Panc1 (cell line): ENCODE measurements at regions of chr2 and their contacts with region 1.

Region 1: DNA sequence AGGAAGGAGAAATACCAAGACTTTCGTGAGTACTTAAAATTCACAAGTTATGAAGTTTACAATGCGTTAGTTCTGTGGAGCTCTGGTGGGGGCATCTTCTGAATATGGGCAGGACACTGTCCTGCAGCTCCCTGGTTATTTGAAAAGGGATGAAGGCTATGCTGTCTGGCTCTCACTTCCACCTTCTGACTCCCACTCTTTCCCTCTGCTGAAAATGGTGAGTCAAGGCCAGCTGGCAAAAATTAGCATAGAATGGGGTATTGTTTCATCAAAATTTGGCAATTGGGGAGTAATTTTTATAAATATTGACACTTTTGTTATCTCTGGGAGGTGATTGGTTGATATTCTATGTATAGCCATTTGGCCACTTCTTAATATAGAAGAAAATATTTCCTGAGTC is 177.4 kb downstream of the PARD3B start:
- DNase-seq: no peak
- ATAC-seq: no peak
- H3K4me3 ChIP-seq: no peak overlapping the region
- H3K27ac ChIP-seq: no peak overlapping the region
- H3K4me1 ChIP-seq: no peaks in the 10 kb centered on the region
- H3K27me3 ChIP-seq: no peaks in the 10 kb centered on the region
- CTCF ChIP-seq: no peak

Region 2: DNA sequence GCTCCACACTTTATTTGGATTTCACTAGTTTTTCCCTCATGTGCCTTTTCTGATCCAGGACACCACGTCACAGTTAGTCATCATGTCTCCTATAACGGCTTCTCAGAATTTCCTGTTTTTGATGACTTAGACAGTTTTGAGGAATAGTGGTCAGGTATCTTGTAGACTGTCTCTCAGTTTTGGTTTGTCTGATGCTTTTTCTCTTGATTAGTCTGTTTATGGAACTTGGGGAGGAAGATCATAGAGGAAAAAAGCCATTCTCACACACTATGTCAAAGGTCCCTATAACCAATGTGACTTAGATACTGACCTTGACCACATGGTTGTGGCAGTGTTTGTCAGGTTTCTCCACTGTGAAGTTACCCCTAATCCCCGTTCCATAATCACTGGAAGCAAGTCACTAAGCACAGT is 1276.6 kb before region 1 on chr2:
- CTCF ChIA-PET with region 1: no interaction called
- POLR2A ChIA-PET with region 1: interaction called, 14 read pairs
- in situ Hi-C with region 1: no loop called
- intact Hi-C with region 1: no loop called
- DNase-seq: no peak
- ATAC-seq: no peak
- H3K4me3 ChIP-seq: no peak overlapping the region
- H3K27ac ChIP-seq: no peak overlapping the region
- H3K4me1 ChIP-seq: no peaks in the 10 kb centered on the region
- H3K27me3 ChIP-seq: no peaks in the 10 kb centered on the region
- CTCF ChIP-seq: no peak

Region 3: GRCh38 chr2:204360209-204361007 is 362.3 kb before region 1 on chr2:
- CTCF ChIA-PET with region 1: no interaction called
- POLR2A ChIA-PET with region 1: no interaction called
- in situ Hi-C with region 1: no loop called
- intact Hi-C with region 1: no loop called
- DNase-seq: no peak
- ATAC-seq: no peak
- H3K4me3 ChIP-seq: no peak overlapping the region
- H3K27ac ChIP-seq: no peak overlapping the region
- H3K4me1 ChIP-seq: no peaks in the 10 kb centered on the region
- H3K27me3 ChIP-seq: no peaks in the 10 kb centered on the region
- CTCF ChIP-seq: peak; percentile 1; the same call in 1 of the 2 replicates

Region 4: DNA sequence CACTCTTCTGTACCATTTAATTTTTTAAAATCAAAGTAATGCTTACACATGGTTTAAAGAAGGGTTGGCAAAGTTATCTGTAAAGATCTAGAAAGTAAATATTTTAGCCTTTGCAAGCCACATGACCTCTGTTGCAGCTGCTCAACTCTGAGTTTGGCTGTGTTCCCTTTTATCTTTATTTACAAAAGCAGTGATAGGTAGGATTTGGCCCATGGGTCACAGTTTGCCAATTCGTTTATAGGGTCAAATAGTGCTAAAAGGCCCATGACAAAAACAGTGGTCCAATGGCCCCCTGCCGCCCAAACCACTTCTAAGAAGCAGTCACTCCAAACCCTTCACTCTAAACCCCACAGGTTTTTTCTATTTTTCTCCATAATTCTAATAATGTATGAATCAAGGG is 52.6 kb before region 1 on chr2:
- CTCF ChIA-PET with region 1: no interaction called
- POLR2A ChIA-PET with region 1: no interaction called
- in situ Hi-C with region 1: no loop called
- intact Hi-C with region 1: no loop called
- DNase-seq: no peak
- ATAC-seq: no peak
- H3K4me3 ChIP-seq: no peak overlapping the region
- H3K27ac ChIP-seq: no peak overlapping the region
- H3K4me1 ChIP-seq: no peaks in the 10 kb centered on the region
- H3K27me3 ChIP-seq: no peaks in the 10 kb centered on the region
- CTCF ChIP-seq: no peak

Region 5: GRCh38 chr2:204781941-204782340 is 59.2 kb after region 1 on chr2:
- CTCF ChIA-PET with region 1: no interaction called
- POLR2A ChIA-PET with region 1: no interaction called
- in situ Hi-C with region 1: no loop called
- intact Hi-C with region 1: no loop called
- DNase-seq: no peak
- ATAC-seq: no peak
- H3K4me3 ChIP-seq: no peak overlapping the region
- H3K27ac ChIP-seq: no peak overlapping the region
- H3K4me1 ChIP-seq: no peaks in the 10 kb centered on the region
- H3K27me3 ChIP-seq: no peaks in the 10 kb centered on the region
- CTCF ChIP-seq: no peak

Region 6: GRCh38 chr2:204909791-204910190 is 187.1 kb after region 1 on chr2:
- CTCF ChIA-PET with region 1: no interaction called
- POLR2A ChIA-PET with region 1: no interaction called
- in situ Hi-C with region 1: no loop called
- intact Hi-C with region 1: no loop called
- DNase-seq: no peak
- ATAC-seq: no peak
- H3K4me3 ChIP-seq: no peak overlapping the region
- H3K27ac ChIP-seq: no peak overlapping the region
- H3K4me1 ChIP-seq: no peaks in the 10 kb centered on the region
- H3K27me3 ChIP-seq: no peaks in the 10 kb centered on the region
- CTCF ChIP-seq: no peak